ENCODE measurements at regions of chr6 and their contacts with region 1.

Region 1: GRCh38 chr6:17584241-17584803 is 15.8 kb upstream of the FAM8A1 start:
- DNase-seq: peak in 1 of 10 donors; percentile 24

Region 2: GRCh38 chr6:17156112-17156921 is 428.0 kb before region 1 on chr6:
- intact Hi-C with region 1: loop called (anchors 1 kb)
- DNase-seq: peak in 7 of 10 donors; percentile 21 to 87 (median 62)

Region 3: DNA sequence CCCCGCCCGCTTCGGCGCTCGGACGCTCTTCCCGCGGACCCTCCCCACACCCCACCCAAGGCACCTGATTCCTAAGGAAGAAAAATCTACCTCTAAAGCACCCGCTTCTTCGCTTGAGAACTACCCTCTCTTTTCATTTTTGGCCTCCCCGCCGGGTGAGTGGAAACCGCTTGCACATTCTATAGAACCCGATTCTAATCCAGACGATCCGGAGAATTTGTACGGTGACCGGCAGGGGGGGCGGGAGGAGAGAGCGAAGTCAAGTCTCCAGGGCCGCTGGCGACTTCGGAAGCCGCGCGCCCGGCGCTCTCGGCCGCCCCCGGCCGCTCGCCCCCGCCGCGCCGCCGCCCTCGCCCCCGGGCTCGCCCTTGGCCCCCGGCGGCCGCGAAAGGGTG is 303.2 kb before region 1 on chr6 and contains the start of gene RBM24:
- intact Hi-C with region 1: loop called (anchors 5 kb)
- DNase-seq: peak in 9 of 10 donors; percentile 40 to 92 (median 61)